GM12878 (cell line): ENCODE measurements at regions of chr1 and their contacts with region 1.

Region 1: GRCh38 chr1:185317034-185317885 is at the start of gene IVNS1ABP:
- DNase-seq: peak; percentile 86
- ATAC-seq: peak; percentile 77
- H3K4me3 ChIP-seq: peak within 1 kb of the TSS; percentile 79
- H3K27ac ChIP-seq: peak within 1 kb of the TSS; percentile 98
- H3K4me1 ChIP-seq: no peaks in the 10 kb centered on the region; the same call in 1 of the 2 replicates
- H3K27me3 ChIP-seq: no peaks in the 10 kb centered on the region
- CTCF ChIP-seq: peak; percentile 44 to 70 (median 57)
- EP300 ChIP-seq: 0 out of 4 replicates have a peak, but pooled peaks of 1 of the 2 experiments have one; percentile 4
- POLR2A ChIP-seq: peak; percentile 100
- RAD21 ChIP-seq: peak; percentile 70
- polyA plus RNA-seq, gene IVNS1ABP: 19.2 to 29.2 TPM

Region 2: DNA sequence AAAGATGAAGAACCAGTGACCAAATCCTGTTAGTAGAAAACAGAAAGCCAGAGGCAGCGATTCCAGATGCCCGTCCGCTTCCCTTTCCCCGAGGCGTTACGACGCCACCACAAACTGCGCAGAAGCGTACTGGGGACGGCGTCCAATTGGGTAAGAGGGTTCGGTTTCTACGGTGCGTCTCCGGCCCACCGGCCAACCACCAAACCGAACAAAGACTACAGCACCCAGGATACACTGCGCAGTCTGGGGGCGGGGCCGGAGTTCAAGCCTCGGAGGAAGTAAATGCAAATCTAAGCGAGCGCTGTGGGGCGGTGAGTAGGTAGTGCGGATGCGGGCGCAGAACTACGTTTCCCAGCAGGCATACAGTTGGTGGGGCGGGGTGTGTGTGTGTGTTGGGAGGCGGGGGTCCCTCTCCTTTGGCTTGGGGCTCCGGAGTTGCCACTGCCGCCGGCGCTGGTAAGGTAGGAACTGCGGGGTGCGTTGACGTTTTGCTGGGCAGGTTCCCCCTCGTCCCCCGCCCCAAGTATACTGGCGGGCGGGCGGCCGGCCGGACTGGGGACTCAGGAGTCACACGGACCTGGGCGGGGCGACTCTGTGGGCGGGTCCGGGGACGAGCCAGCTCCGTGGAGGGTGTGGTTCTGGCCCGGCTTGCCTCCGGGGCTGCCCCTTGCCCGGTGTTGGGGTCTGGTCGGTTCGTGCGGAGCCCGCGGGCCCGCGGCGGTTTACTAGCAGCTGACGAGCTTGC is 160.2 kb before region 1 on chr1 and contains the starts of genes SWT1 and TRMT1L:
- CTCF ChIA-PET with region 1: interaction called, 5 read pairs
- POLR2A ChIA-PET with region 1: interaction called, 5 read pairs
- RAD21 ChIA-PET with region 1: interaction called, 5 read pairs
- SMC1A ChIA-PET with region 1: no interaction called
- in situ Hi-C with region 1: no loop called
- intact Hi-C with region 1: loop called (anchors 5 kb)
- DNase-seq: peak; percentile 93
- ATAC-seq: peak; percentile 92
- H3K4me3 ChIP-seq: peak within 1 kb of the TSS; percentile 94
- H3K27ac ChIP-seq: peak within 1 kb of the TSS; percentile 94
- H3K4me1 ChIP-seq: peaks cover 18% of the 10 kb centered on the region; the same call in 1 of the 2 replicates
- H3K27me3 ChIP-seq: no peaks in the 10 kb centered on the region
- CTCF ChIP-seq: no peak
- EP300 ChIP-seq: no peak
- POLR2A ChIP-seq: peak; percentile 89
- RAD21 ChIP-seq: no peak
- polyA plus RNA-seq, gene SWT1: 1.0 to 1.4 TPM
- polyA plus RNA-seq, gene TRMT1L: 3.5 to 4.1 TPM

Region 3: DNA sequence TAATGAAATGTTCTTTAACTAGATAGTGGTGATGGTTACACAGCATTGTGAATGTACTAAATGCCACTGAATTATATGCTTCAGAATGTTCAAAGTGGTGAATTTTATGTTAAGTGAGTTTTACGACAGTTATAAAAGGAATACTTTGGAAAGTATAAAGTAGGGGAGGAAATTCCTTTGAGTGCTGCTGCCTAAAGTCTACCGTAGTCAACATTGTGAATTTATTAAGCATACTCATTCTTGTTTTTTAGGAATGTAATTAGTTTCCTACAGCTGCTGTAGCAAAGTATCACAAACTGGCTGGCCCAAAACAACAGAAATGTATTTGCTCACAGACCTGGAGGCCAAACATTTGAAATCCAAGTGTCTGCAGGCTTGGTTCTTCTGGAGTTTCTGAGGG is 87.3 kb before region 1 on chr1:
- CTCF ChIA-PET with region 1: no interaction called
- POLR2A ChIA-PET with region 1: no interaction called
- RAD21 ChIA-PET with region 1: no interaction called
- SMC1A ChIA-PET with region 1: no interaction called
- in situ Hi-C with region 1: no loop called
- intact Hi-C with region 1: no loop called
- DNase-seq: no peak
- ATAC-seq: no peak
- H3K4me3 ChIP-seq: no peak overlapping the region
- H3K27ac ChIP-seq: no peak overlapping the region
- H3K4me1 ChIP-seq: no peaks in the 10 kb centered on the region
- H3K27me3 ChIP-seq: no peaks in the 10 kb centered on the region
- CTCF ChIP-seq: no peak
- EP300 ChIP-seq: no peak
- POLR2A ChIP-seq: no peak
- RAD21 ChIP-seq: no peak

Region 4: GRCh38 chr1:185367218-185367617 is 50.0 kb after region 1 on chr1:
- CTCF ChIA-PET with region 1: no interaction called
- POLR2A ChIA-PET with region 1: no interaction called
- RAD21 ChIA-PET with region 1: interaction called, 4 read pairs
- SMC1A ChIA-PET with region 1: interaction called, 6 read pairs
- in situ Hi-C with region 1: no loop called
- intact Hi-C with region 1: loop called (anchors 5 kb)
- DNase-seq: no peak
- ATAC-seq: no peak
- H3K4me3 ChIP-seq: no peak overlapping the region
- H3K27ac ChIP-seq: no peak overlapping the region
- H3K4me1 ChIP-seq: peaks cover 3% of the 10 kb centered on the region
- H3K27me3 ChIP-seq: no peaks in the 10 kb centered on the region
- CTCF ChIP-seq: no peak
- EP300 ChIP-seq: no peak
- POLR2A ChIP-seq: no peak
- RAD21 ChIP-seq: no peak

Region 5: DNA sequence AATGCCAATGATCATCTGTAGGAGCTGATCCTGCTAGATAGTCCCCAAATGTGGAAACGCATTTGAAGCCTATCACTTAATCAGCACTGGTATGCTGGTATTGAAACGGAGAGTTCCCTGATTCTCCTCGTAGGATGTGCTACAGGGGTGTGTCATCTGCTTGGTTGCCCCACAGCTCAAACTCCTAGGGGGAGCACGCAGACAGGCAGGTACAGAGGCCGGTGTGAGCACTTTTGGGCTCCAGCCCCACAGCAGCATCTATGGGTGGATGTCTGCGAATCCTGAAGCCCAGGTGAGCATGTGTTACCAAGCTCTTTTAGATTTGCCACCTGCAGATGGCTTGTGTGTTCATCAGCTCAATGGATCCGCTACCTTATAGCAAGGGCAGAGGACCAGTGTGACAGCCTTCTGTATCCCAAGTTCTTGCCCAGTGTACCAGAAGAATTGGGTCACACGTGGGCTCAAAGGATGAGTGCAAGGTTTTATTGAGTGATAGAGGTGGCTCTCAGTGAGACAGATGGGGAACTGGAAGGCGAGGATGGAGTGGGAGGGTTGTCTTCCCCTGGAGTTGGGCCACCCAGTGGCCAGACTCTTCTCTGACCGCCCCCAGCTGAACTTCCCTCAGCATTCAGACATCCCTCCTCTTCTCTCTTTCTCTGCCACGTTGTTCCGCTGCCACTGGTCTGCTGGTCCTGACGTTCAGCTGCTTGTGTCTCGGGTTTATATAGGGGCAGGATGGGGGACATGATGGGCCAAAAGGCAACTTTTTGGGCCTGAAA is 149.7 kb after region 1 on chr1:
- CTCF ChIA-PET with region 1: no interaction called
- POLR2A ChIA-PET with region 1: no interaction called
- RAD21 ChIA-PET with region 1: interaction called, 3 read pairs
- SMC1A ChIA-PET with region 1: no interaction called
- in situ Hi-C with region 1: no loop called
- intact Hi-C with region 1: loop called (anchors 5 kb)
- DNase-seq: no peak
- ATAC-seq: no peak; the same call in 2 of the 3 replicates
- H3K4me3 ChIP-seq: no peak overlapping the region
- H3K27ac ChIP-seq: no peak overlapping the region
- H3K4me1 ChIP-seq: no peaks in the 10 kb centered on the region
- H3K27me3 ChIP-seq: no peaks in the 10 kb centered on the region; a peak in 1 of 4 replicates
- CTCF ChIP-seq: 0 out of 6 replicates have a peak, but pooled peaks of 1 of the 3 experiments have one; percentile 6
- EP300 ChIP-seq: no peak
- POLR2A ChIP-seq: no peak
- RAD21 ChIP-seq: no peak

Region 6: DNA sequence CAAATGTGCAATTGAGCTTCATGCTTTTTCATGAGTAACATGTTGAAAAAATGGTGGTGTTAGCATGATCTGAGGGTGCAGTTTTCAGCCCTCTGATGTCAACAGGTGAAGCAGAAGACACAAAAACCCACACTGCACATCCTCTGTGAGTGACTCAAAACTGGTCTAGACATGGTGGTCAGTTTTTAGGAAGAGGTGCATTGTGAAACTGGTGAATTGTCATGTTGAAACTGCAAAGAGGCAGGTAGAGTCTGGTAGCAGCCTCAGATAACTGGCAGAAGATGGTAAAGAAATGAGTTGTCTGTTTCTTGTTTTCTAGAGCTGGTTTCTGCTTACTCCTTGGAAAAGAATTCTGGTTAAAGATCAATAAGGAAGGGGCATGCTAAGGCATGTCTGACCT is 319.6 kb after region 1 on chr1:
- CTCF ChIA-PET with region 1: no interaction called
- POLR2A ChIA-PET with region 1: no interaction called
- RAD21 ChIA-PET with region 1: interaction called, 3 read pairs
- SMC1A ChIA-PET with region 1: interaction called, 7 read pairs
- in situ Hi-C with region 1: no loop called
- intact Hi-C with region 1: loop called (anchors 2 kb)
- DNase-seq: peak; percentile 91
- ATAC-seq: peak; percentile 99
- H3K4me3 ChIP-seq: no peak overlapping the region
- H3K27ac ChIP-seq: no peak overlapping the region
- H3K4me1 ChIP-seq: peaks cover 2% of the 10 kb centered on the region; the same call in 1 of the 2 replicates
- H3K27me3 ChIP-seq: no peaks in the 10 kb centered on the region
- CTCF ChIP-seq: no peak
- EP300 ChIP-seq: peak; percentile 75 to 96; a peak in 3 of 4 replicates
- POLR2A ChIP-seq: no peak
- RAD21 ChIP-seq: no peak

Region 7: GRCh38 chr1:186375088-186375953 is 1058.1 kb after region 1 on chr1 and contains the starts of genes ODR4 and TPR:
- CTCF ChIA-PET with region 1: no interaction called
- POLR2A ChIA-PET with region 1: no interaction called
- RAD21 ChIA-PET with region 1: no interaction called
- SMC1A ChIA-PET with region 1: no interaction called
- in situ Hi-C with region 1: loop called (anchors 25 kb)
- intact Hi-C with region 1: no loop called
- DNase-seq: peak; percentile 96
- ATAC-seq: peak; percentile 92
- H3K4me3 ChIP-seq: peak within 1 kb of the TSS; percentile 83
- H3K27ac ChIP-seq: peak within 1 kb of the TSS; percentile 93
- H3K4me1 ChIP-seq: no peaks in the 10 kb centered on the region; the same call in 1 of the 2 replicates
- H3K27me3 ChIP-seq: no peaks in the 10 kb centered on the region
- CTCF ChIP-seq: peak; percentile 83 to 99 (median 98)
- EP300 ChIP-seq: 0 out of 4 replicates have a peak, but pooled peaks have one; percentile 11 to 35
- POLR2A ChIP-seq: peak; percentile 81
- RAD21 ChIP-seq: peak; percentile 48
- polyA plus RNA-seq, gene ODR4: 12.6 to 15.4 TPM
- polyA plus RNA-seq, gene TPR: 30.9 to 37.2 TPM